ENCODE measurements at regions of chr5 and their contacts with region 1.

Region 1: DNA sequence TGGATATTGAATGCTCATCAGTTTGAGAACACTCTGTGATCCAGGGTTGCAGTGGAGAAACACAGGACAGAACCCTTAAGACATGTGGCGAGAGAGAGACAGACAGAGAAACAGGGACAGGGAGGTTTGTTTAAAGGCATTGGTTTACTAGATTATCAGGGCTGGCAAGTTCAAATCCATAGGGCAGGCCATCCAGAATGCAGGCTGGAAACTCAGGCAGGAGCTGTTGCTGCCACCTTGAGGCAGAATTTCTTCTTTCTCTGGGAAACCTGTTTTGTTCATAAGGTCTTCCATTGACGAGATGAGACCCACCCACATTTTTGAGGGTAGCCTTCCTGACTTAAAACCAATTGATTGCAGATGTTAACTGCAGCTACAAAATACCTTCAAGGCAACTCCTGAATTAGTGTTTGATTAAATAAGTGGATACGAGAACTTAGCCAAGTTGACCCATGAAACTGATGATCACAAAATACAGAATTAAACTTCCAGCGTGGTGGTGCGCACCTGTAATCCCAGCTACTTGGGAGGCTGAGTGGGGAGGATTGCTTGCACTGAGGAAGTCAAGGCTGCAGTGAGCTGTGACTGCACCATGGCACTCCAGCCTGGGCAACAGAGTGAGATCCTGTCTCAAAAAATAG is 55.9 kb downstream of the NSUN2 start:
- DNase-seq: peak in 1 of 2 experiments; percentile 54
- H3K4me3 ChIP-seq: no peak overlapping the region
- H3K4me3 Mint-ChIP-seq: no peak overlapping the region
- H3K27ac Mint-ChIP-seq: no peak overlapping the region
- H3K4me1 ChIP-seq: no peaks in the 10 kb centered on the region
- H3K4me1 Mint-ChIP-seq: no peaks in the 10 kb centered on the region
- H3K27me3 ChIP-seq: no peaks in the 10 kb centered on the region
- H3K27me3 Mint-ChIP-seq: peaks cover 17% of the 10 kb centered on the region
- CTCF ChIP-seq: peak in 1 of 2 experiments; percentile 46

Region 2: DNA sequence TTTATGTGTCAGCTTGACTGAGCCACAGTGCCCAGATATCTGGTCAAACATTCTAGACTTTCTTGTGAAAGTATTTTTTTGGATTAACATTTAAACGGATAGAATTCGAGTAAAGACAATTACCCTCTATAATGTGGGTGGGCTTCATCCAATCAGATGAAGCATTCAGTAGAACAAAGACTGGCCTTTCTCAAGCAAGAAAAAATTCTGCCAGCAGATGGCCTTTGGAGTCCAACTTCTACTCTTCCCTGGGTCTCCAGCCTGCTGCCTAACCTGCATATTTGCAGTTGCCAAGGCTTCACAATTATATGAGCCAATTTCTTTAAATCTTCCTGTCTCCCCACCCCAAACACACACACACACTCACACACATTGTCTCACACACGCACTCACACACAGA is 285.0 kb before region 1 on chr5:
- CTCF ChIA-PET with region 1: no interaction called
- POLR2A ChIA-PET with region 1: no interaction called
- intact Hi-C with region 1: loop called (anchors 1 kb)
- DNase-seq: peak in 1 of 2 experiments; percentile 41
- H3K4me3 ChIP-seq: no peak overlapping the region
- H3K4me3 Mint-ChIP-seq: no peak overlapping the region
- H3K27ac Mint-ChIP-seq: no peak overlapping the region
- H3K4me1 ChIP-seq: no peaks in the 10 kb centered on the region
- H3K4me1 Mint-ChIP-seq: no peaks in the 10 kb centered on the region
- H3K27me3 ChIP-seq: no peaks in the 10 kb centered on the region
- H3K27me3 Mint-ChIP-seq: peaks cover 6% of the 10 kb centered on the region
- CTCF ChIP-seq: peak in 1 of 2 experiments; percentile 40

Region 3: GRCh38 chr5:6377905-6378765 is 198.8 kb before region 1 on chr5 and contains the start of gene MED10:
- CTCF ChIA-PET with region 1: no interaction called
- POLR2A ChIA-PET with region 1: no interaction called
- intact Hi-C with region 1: loop called (anchors 10 kb)
- DNase-seq: peak; percentile 93 to 95
- H3K4me3 ChIP-seq: peak within 1 kb of the TSS; percentile 89
- H3K4me3 Mint-ChIP-seq: peak within 1 kb of the TSS; percentile 100
- H3K27ac Mint-ChIP-seq: peak within 1 kb of the TSS; percentile 98
- H3K4me1 ChIP-seq: peaks cover 7% of the 10 kb centered on the region
- H3K4me1 Mint-ChIP-seq: peaks cover 6% of the 10 kb centered on the region
- H3K27me3 ChIP-seq: no peaks in the 10 kb centered on the region
- H3K27me3 Mint-ChIP-seq: no peaks in the 10 kb centered on the region
- CTCF ChIP-seq: no peak
- total RNA-seq, gene MED10: 48.6 and 50.6 TPM in 2 replicates

Region 4: GRCh38 chr5:6632917-6633468 is 56.0 kb after region 1 on chr5 and contains the starts of genes NSUN2 and SRD5A1:
- CTCF ChIA-PET with region 1: no interaction called
- POLR2A ChIA-PET with region 1: no interaction called
- intact Hi-C with region 1: no loop called
- DNase-seq: peak; percentile 89 to 91
- H3K4me3 ChIP-seq: peak within 1 kb of the TSS; percentile 96
- H3K4me3 Mint-ChIP-seq: peak within 1 kb of the TSS; percentile 100
- H3K27ac Mint-ChIP-seq: peak within 1 kb of the TSS; percentile 99
- H3K4me1 ChIP-seq: peaks cover 7% of the 10 kb centered on the region; the same call in 1 of the 2 replicates
- H3K4me1 Mint-ChIP-seq: peaks cover 12% of the 10 kb centered on the region
- H3K27me3 ChIP-seq: no peaks in the 10 kb centered on the region
- H3K27me3 Mint-ChIP-seq: no peaks in the 10 kb centered on the region
- CTCF ChIP-seq: no peak
- total RNA-seq, gene NSUN2: 93.8 and 105 TPM in 2 replicates
- total RNA-seq, gene SRD5A1: 19.4 and 22.0 TPM in 2 replicates

Measured in Caco-2 (cell line).